Testis (tissue), 5 donors: ENCODE measurements at regions of chr9 and their contacts with region 1.

Region 1: GRCh38 chr9:129460323-129461261 is 160.3 kb downstream of the C9orf50 start:
- DNase-seq: peak; percentile 98
- H3K4me3 ChIP-seq: peak overlapping the region; percentile 26 to 64
- H3K27ac ChIP-seq: peak overlapping the region; percentile 87 to 99
- H3K4me1 ChIP-seq: peaks cover 45% of the 10 kb centered on the region
- H3K27me3 ChIP-seq: no peaks in the 10 kb centered on the region
- CTCF ChIP-seq: peak in 1 of 3 experiments; percentile 21
- POLR2A ChIP-seq: peak; percentile 3

Region 2: GRCh38 chr9:129413537-129414376 is 46.8 kb before region 1 on chr9:
- intact Hi-C with region 1: loop called (anchors 10 kb)
- DNase-seq: peak; percentile 99
- H3K4me3 ChIP-seq: peak overlapping the region; percentile 68 to 78
- H3K27ac ChIP-seq: peak overlapping the region; percentile 99 to 100
- H3K4me1 ChIP-seq: peaks cover 31% of the 10 kb centered on the region
- H3K27me3 ChIP-seq: no peaks in the 10 kb centered on the region
- CTCF ChIP-seq: peak in 1 of 3 experiments; percentile 26
- POLR2A ChIP-seq: no peak